B cell (primary cell): ENCODE measurements at regions of chr3 and their contacts with region 1.

Region 1: GRCh38 chr3:102673271-102674115 is 238.7 kb downstream of the ZPLD1 start:
- DNase-seq: peak; percentile 58
- ATAC-seq: no peak
- H3K4me3 ChIP-seq: no peak overlapping the region
- H3K4me3 Mint-ChIP-seq: no peak overlapping the region
- H3K27ac ChIP-seq: no peak overlapping the region
- H3K27ac Mint-ChIP-seq: no peak overlapping the region
- H3K4me1 ChIP-seq: peaks cover 0 to 6% of the 10 kb centered on the region in 2 donors
- H3K4me1 Mint-ChIP-seq: peaks cover 2% of the 10 kb centered on the region
- H3K27me3 ChIP-seq: no peaks in the 10 kb centered on the region
- H3K27me3 Mint-ChIP-seq: peaks cover 8% of the 10 kb centered on the region
- CTCF ChIP-seq: peak; percentile 90

Region 2: DNA sequence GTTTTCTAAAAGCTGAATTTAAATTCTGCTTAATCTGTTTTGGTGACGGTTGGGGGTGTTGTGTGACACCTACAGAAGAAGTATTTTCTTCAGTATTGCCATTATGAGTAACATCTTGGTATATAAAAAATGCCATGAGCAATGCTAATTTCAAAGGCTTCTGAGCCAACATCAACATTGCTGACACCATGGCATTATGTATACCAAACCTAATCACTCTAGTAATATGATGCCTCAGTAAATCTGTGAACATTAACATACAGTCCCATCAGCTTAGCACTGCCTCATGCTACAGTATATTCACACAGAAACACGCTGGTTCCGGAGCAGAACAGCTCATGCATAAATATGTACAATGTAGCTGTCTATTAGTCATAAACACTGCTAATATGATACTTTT is 162.8 kb before region 1 on chr3:
- CTCF ChIA-PET with region 1: no interaction called
- POLR2A ChIA-PET with region 1: no interaction called
- intact Hi-C with region 1: no loop called
- DNase-seq: no peak
- ATAC-seq: no peak
- H3K4me3 ChIP-seq: no peak overlapping the region
- H3K4me3 Mint-ChIP-seq: no peak overlapping the region
- H3K27ac ChIP-seq: no peak overlapping the region
- H3K27ac Mint-ChIP-seq: no peak overlapping the region
- H3K4me1 ChIP-seq: no peaks in the 10 kb centered on the region
- H3K4me1 Mint-ChIP-seq: no peaks in the 10 kb centered on the region
- H3K27me3 ChIP-seq: no peaks in the 10 kb centered on the region
- H3K27me3 Mint-ChIP-seq: peaks cover 25% of the 10 kb centered on the region
- CTCF ChIP-seq: no peak

Region 3: DNA sequence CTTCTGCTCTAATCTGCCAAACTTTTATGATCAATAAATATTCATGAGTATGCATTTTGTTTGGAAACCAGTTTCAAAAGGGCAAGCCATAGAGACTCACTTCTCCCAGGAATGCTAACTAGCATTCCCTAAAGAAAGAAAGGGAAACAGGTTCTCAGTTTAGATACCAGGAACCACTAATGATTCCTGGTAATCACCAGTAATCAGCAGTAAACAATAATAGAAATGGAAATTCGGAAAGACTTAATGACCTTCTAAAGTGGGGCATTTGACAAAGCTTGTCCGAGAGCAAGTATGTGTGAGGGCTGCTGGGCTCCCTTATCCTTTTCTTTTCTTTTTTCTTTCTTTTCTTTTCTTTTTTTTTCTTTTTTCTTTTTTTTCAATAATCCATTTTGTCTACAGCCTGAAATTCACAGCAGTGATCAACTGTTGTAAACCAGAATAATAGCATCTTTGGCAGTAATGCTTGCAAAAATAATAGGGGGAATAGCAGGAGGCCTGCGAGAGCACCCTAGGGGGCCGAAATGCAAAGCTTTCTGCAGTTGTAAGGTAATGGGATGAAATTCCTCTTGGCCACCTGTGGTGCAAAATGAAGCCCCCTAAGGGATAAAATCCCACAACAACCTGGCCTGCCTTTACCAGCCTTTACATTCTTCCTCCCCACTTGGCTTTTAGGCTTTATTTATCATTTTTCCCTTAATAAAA is 14.5 kb after region 1 on chr3:
- CTCF ChIA-PET with region 1: interaction called, 16 read pairs
- POLR2A ChIA-PET with region 1: no interaction called
- intact Hi-C with region 1: no loop called
- DNase-seq: no peak
- ATAC-seq: no peak
- H3K4me3 ChIP-seq: no peak overlapping the region
- H3K4me3 Mint-ChIP-seq: no peak overlapping the region
- H3K27ac ChIP-seq: no peak overlapping the region
- H3K27ac Mint-ChIP-seq: no peak overlapping the region
- H3K4me1 ChIP-seq: no peaks in the 10 kb centered on the region
- H3K4me1 Mint-ChIP-seq: no peaks in the 10 kb centered on the region
- H3K27me3 ChIP-seq: peaks cover 0 to 4% (median 1%) of the 10 kb centered on the region in 4 experiments
- H3K27me3 Mint-ChIP-seq: peaks cover 24% of the 10 kb centered on the region
- CTCF ChIP-seq: no peak